ENCODE measurements at regions of chr16 and their contacts with region 1.

Region 1: GRCh38 chr16:57084257-57084770 is 8.1 kb upstream of the CPNE2 start:
- DNase-seq: peak; percentile 84
- ATAC-seq: peak; percentile 81
- H3K4me3 Mint-ChIP-seq: no peak overlapping the region
- H3K27ac Mint-ChIP-seq: peak overlapping the region; percentile 76
- H3K4me1 Mint-ChIP-seq: peaks cover 7% of the 10 kb centered on the region
- H3K27me3 Mint-ChIP-seq: peaks cover 6% of the 10 kb centered on the region

Region 2: DNA sequence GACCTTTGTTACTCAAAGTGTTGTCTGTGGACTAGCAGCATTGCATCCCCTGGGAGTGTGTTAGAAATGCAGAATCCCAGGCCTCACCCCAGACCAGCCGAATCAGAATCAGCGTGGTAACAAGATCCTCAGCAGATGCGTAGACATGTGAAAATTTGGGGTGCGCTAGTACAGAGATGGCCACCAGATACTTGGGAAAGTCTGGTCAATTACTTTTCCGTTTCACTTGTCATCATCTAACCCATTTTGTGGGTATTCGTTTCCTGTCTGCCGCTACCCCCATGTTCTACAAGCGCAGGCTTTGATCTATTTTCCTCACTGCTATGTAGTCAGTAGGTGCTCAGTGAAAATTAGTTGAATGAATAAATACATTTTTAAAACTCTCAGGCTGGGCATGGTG is 185.5 kb before region 1 on chr16:
- CTCF ChIA-PET with region 1: no interaction called
- DNase-seq: peak; percentile 62
- ATAC-seq: peak; percentile 71
- H3K4me3 Mint-ChIP-seq: no peak overlapping the region
- H3K27ac Mint-ChIP-seq: no peak overlapping the region
- H3K4me1 Mint-ChIP-seq: peaks cover 27% of the 10 kb centered on the region
- H3K27me3 Mint-ChIP-seq: peaks cover 58% of the 10 kb centered on the region

Region 3: GRCh38 chr16:57039148-57039812 is 45.0 kb before region 1 on chr16:
- CTCF ChIA-PET with region 1: interaction called, 10 read pairs
- DNase-seq: peak; percentile 77
- ATAC-seq: peak; percentile 18
- H3K4me3 Mint-ChIP-seq: peak overlapping the region; percentile 44
- H3K27ac Mint-ChIP-seq: peak overlapping the region; percentile 97
- H3K4me1 Mint-ChIP-seq: peaks cover 82% of the 10 kb centered on the region
- H3K27me3 Mint-ChIP-seq: no peaks in the 10 kb centered on the region

Region 4: DNA sequence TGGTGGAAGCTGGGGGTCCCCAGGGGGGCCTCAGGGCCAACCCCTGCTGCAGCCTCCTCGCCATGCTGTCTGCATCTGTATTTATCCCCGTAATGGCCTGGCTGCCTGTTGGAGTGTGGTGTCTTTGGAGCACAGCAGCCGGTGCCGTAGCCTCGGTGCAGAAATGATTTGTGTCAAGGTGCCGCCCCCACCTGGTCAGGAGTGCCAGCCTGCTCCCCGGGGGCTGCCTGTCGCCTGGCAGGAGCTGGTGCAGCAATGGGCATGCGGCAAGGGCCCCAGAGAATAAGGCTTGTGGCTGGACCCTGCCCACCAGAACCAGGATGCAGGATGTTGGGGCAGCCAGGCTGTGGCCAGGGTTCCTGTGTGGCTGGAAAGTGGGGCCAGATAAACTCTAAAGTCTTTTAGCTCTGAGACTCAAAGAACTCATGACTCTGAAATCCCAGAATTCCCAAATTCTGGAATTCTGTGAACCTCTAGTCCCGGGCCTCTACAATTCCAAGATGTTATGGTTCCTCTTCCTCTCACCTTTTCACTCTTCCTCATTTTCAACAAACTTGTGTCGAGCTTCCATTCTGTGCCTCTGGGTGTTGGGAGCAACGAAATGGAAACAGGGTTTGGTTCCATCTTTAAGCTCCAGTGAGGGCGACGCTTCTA is 14.0 kb after region 1 on chr16:
- CTCF ChIA-PET with region 1: interaction called, 27 read pairs
- DNase-seq: no peak
- ATAC-seq: no peak
- H3K4me3 Mint-ChIP-seq: no peak overlapping the region
- H3K27ac Mint-ChIP-seq: no peak overlapping the region
- H3K4me1 Mint-ChIP-seq: peaks cover 16% of the 10 kb centered on the region
- H3K27me3 Mint-ChIP-seq: peaks cover 25% of the 10 kb centered on the region

Region 5: GRCh38 chr16:57152096-57153093 is 68.1 kb after region 1 on chr16:
- CTCF ChIA-PET with region 1: interaction called, 13 read pairs
- DNase-seq: peak; percentile 28
- ATAC-seq: no peak
- H3K4me3 Mint-ChIP-seq: no peak overlapping the region
- H3K27ac Mint-ChIP-seq: no peak overlapping the region
- H3K4me1 Mint-ChIP-seq: peaks cover 2% of the 10 kb centered on the region
- H3K27me3 Mint-ChIP-seq: no peaks in the 10 kb centered on the region

Region 6: GRCh38 chr16:57300387-57301125 is 216.2 kb after region 1 on chr16:
- CTCF ChIA-PET with region 1: interaction called, 13 read pairs
- DNase-seq: peak; percentile 99
- ATAC-seq: peak; percentile 90
- H3K4me3 Mint-ChIP-seq: no peak overlapping the region
- H3K27ac Mint-ChIP-seq: no peak overlapping the region
- H3K4me1 Mint-ChIP-seq: peaks cover 24% of the 10 kb centered on the region
- H3K27me3 Mint-ChIP-seq: no peaks in the 10 kb centered on the region